ENCODE measurements at regions of chr11 and their contacts with region 1.

Region 1: GRCh38 chr11:62880803-62881578 is at the start of gene SLC3A2:
- DNase-seq: peak; percentile 94
- ATAC-seq: peak; percentile 75
- H3K4me3 Mint-ChIP-seq: peak within 1 kb of the TSS; percentile 99
- H3K27ac Mint-ChIP-seq: peak within 1 kb of the TSS; percentile 100
- H3K4me1 Mint-ChIP-seq: peaks cover 44% of the 10 kb centered on the region
- H3K27me3 Mint-ChIP-seq: no peaks in the 10 kb centered on the region
- total RNA-seq, gene SLC3A2: 401 to 402 TPM

Region 2: DNA sequence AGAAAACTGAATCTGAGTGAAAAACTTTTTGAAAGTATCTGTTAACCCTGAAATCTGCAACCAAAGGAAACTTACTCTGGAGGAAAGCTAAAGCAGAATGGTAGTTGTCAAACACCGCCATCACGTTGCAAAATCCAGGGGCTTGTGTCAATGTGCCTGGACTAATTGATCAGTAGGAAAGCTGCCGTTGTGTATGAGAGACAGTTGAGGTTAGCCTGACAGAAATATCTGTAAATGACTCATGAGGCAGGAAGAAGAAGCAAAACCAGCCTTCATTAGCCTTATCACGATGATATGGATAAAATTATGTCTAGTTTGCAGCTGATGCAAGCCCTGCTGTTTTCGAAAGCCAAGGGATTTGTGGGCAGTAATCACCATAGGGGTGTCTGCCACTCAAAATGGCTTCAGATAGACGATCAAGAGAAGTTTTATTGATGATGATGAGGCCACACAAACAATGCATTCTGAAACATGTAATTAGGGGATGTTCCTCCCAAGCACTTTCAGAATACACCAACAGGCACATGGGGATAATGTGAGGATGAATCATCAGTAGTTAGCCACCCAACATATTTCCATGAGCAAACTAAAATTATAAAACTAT is 453.3 kb before region 1 on chr11:
- CTCF ChIA-PET with region 1: interaction called, 3 read pairs
- POLR2A ChIA-PET with region 1: no interaction called
- intact Hi-C with region 1: loop called in 1 of 2 experiments (anchors 10 kb)
- DNase-seq: peak; percentile 36
- ATAC-seq: peak; percentile 63
- H3K4me3 Mint-ChIP-seq: peak overlapping the region; percentile 5
- H3K27ac Mint-ChIP-seq: peak overlapping the region; percentile 70
- H3K4me1 Mint-ChIP-seq: peaks cover 29% of the 10 kb centered on the region
- H3K27me3 Mint-ChIP-seq: no peaks in the 10 kb centered on the region

Region 3: DNA sequence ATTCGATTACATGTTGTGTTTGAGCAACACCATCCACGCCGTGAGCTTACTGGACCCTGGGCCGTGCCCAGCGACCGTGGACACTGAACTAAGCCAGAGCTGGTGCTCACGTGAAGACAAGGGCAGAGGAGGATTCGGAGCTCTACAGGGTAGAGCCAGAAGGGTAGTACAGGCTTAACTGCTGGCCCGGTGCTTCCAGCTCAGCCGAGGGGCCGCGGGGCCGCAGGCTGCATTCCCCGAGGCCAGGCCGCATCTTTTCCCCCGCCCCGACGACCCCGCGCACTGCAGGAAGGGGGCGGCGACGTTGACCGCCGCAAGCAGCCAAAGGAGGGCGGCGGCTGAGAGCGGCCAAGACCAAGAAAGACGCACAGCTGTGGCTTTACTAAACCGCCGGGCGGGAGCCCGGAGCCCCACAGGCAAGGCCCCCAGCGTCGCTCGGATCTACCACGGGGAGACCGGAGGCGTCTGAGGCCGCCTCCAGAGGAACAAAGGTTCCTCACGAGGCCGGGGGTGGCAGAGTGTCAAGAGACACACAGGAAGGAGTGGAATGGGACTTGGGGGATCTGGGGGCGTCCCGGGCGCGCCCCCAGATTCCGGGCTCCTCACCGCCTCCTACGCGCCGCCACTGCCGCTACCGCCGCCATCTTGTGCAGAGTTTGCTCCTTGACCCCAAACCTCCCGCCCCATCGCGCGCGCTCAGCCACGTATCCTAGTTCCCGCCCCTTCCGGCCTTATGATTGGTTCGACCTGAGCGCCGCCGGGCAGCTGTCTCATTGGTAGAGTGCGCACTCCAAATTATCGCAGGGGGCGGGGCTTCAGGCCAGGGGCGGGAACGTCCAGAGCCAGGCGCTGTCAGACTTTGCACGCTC is 234.8 kb before region 1 on chr11 and contains the start of gene GANAB:
- CTCF ChIA-PET with region 1: no interaction called
- POLR2A ChIA-PET with region 1: no interaction called
- intact Hi-C with region 1: loop called in 1 of 2 experiments (anchors 1 kb)
- DNase-seq: peak; percentile 100
- ATAC-seq: peak; percentile 99
- H3K4me3 Mint-ChIP-seq: peak within 1 kb of the TSS; percentile 93
- H3K27ac Mint-ChIP-seq: peak within 1 kb of the TSS; percentile 93
- H3K4me1 Mint-ChIP-seq: peaks cover 34% of the 10 kb centered on the region
- H3K27me3 Mint-ChIP-seq: no peaks in the 10 kb centered on the region
- total RNA-seq, gene GANAB: 208 to 218 TPM

Region 4: GRCh38 chr11:62753736-62754603 is 127.0 kb before region 1 on chr11 and contains the start of gene ZBTB3:
- CTCF ChIA-PET with region 1: interaction called, 4 read pairs
- POLR2A ChIA-PET with region 1: interaction called, 10 read pairs
- intact Hi-C with region 1: loop called in 1 of 2 experiments (anchors 1 kb)
- DNase-seq: peak; percentile 98
- ATAC-seq: peak; percentile 98
- H3K4me3 Mint-ChIP-seq: peak within 1 kb of the TSS; percentile 96
- H3K27ac Mint-ChIP-seq: peak within 1 kb of the TSS; percentile 97
- H3K4me1 Mint-ChIP-seq: peaks cover 26% of the 10 kb centered on the region
- H3K27me3 Mint-ChIP-seq: no peaks in the 10 kb centered on the region
- total RNA-seq, gene ZBTB3: 6.0 to 10.2 TPM

Region 5: GRCh38 chr11:62805076-62805892 is 75.7 kb before region 1 on chr11 and contains the start of gene NXF1:
- CTCF ChIA-PET with region 1: interaction called, 3 read pairs
- POLR2A ChIA-PET with region 1: interaction called, 3 read pairs
- intact Hi-C with region 1: loop called (anchors 1 to 2 kb)
- DNase-seq: peak; percentile 97
- ATAC-seq: peak; percentile 79
- H3K4me3 Mint-ChIP-seq: peak within 1 kb of the TSS; percentile 99
- H3K27ac Mint-ChIP-seq: peak within 1 kb of the TSS; percentile 97
- H3K4me1 Mint-ChIP-seq: peaks cover 29% of the 10 kb centered on the region
- H3K27me3 Mint-ChIP-seq: no peaks in the 10 kb centered on the region
- total RNA-seq, gene NXF1: 89.5 to 97.6 TPM

Region 6: GRCh38 chr11:62855571-62856332 is 25.2 kb before region 1 on chr11:
- CTCF ChIA-PET with region 1: interaction called, 17 read pairs
- POLR2A ChIA-PET with region 1: interaction called, 65 read pairs
- intact Hi-C with region 1: loop called (anchors 1 kb)
- DNase-seq: peak; percentile 99
- ATAC-seq: peak; percentile 83
- H3K4me3 Mint-ChIP-seq: peak overlapping the region; percentile 99
- H3K27ac Mint-ChIP-seq: peak overlapping the region; percentile 97
- H3K4me1 Mint-ChIP-seq: peaks cover 53% of the 10 kb centered on the region
- H3K27me3 Mint-ChIP-seq: no peaks in the 10 kb centered on the region

Region 7: DNA sequence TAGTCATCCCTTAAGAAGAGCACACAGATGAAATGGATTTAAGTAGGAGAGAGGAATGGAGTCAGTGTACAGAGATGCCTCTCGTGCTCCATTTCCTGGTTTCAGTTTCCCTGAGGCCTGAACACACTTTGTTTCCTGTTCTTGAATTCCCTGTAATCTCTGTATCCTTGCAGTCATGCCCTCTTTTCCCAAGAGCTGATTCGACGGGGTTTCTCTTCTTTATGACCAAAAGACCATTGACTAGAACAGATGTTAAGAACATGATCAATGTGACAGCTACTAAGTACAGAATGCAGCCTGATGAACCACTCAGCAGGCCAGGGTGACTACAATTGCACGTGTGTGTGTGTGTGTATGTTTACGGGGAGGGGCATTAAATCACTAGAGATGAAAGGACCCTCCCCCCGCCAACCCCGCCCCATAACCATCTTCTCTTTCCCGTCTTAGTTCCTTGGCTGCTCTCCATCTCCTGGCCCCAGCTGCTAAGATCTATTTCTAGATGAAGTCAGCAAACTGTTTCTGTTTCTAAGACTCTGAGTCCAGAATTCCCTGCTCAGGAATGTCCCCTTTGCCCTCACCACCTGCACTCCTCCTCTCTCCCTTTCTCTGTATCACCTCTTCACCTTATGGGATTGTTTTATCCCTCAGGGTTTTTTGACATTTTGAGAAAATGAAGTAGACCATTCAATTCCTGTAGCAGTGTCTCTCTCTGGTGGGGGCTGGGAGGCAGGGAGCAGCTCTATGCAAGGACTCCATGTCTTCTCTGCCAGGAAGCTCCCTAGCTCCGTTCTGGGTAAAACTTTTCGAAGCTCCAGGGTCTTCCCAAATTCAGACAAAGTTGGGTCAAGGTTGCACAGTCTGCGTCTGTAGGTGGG is 77.8 kb after region 1 on chr11:
- CTCF ChIA-PET with region 1: no interaction called
- POLR2A ChIA-PET with region 1: no interaction called
- intact Hi-C with region 1: no loop called
- DNase-seq: no peak
- ATAC-seq: no peak
- H3K4me3 Mint-ChIP-seq: no peak overlapping the region
- H3K27ac Mint-ChIP-seq: no peak overlapping the region
- H3K4me1 Mint-ChIP-seq: no peaks in the 10 kb centered on the region
- H3K27me3 Mint-ChIP-seq: peaks cover 10% of the 10 kb centered on the region

Region 8: GRCh38 chr11:63986156-63986931 is 1105.4 kb after region 1 on chr11 and contains the start of gene OTUB1:
- CTCF ChIA-PET with region 1: no interaction called
- POLR2A ChIA-PET with region 1: no interaction called
- intact Hi-C with region 1: loop called in 1 of 2 experiments (anchors 2 kb)
- DNase-seq: peak; percentile 94
- ATAC-seq: peak; percentile 92
- H3K4me3 Mint-ChIP-seq: peak within 1 kb of the TSS; percentile 93
- H3K27ac Mint-ChIP-seq: peak within 1 kb of the TSS; percentile 89
- H3K4me1 Mint-ChIP-seq: peaks cover 23% of the 10 kb centered on the region
- H3K27me3 Mint-ChIP-seq: no peaks in the 10 kb centered on the region
- total RNA-seq, gene OTUB1: 77.4 to 86.1 TPM